PC-9 (cell line): ENCODE measurements at regions of chr7 and their contacts with region 1.

Region 1: DNA sequence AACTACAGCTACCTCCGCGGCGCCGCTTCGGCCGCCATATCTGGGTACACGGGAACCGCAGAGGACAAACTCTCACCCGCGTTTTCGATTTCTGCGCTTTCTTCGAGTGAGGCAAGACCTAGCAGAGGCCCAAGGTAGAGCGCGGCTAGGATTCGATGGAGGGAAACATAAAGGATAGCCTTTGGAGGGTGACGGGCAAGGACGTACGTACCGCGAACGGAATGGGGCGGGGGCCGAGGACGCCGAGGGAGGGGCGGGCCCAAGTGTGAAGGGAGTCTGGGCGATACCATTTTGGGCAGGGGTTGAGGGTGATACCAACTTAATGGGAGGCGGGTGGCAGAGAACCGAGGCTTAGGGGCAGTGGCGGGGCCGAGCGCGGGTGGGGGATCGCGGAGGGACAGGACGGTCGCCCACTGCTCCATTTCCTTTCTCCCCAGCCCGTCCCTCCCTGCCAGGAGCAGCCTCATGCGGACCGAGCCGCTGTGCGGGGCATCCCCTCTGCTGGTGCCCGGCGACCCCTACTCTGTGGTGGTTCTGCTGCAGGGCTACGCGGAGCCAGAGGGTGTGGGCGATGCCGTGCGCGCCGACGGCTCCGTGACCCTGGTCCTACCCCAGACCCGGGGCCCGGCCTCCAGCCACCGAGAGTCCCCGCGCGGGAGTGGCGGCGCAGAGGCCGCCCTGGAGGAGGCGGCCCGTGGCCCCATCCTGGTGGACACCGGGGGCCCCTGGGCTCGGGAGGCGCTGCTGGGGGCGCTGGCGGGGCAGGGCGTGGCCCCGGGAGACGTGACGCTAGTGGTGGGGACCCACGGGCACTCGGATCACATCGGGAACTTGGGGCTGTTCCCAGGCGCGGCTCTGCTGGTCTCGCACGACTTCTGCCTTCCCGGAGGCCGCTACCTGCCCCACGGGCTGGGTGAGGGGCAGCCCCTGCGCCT is at the start of gene MBLAC1:
- DNase-seq: peak; percentile 68 to 92
- H3K4me3 ChIP-seq: peak within 1 kb of the TSS; percentile 75
- H3K27ac ChIP-seq: peak within 1 kb of the TSS; percentile 82
- H3K4me1 ChIP-seq: peaks cover 19% of the 10 kb centered on the region; the same call in 1 of the 2 replicates
- H3K27me3 ChIP-seq: no peaks in the 10 kb centered on the region
- CTCF ChIP-seq: no peak
- total RNA-seq, gene MBLAC1: 0.70 and 1.4 TPM in 2 replicates

Region 2: DNA sequence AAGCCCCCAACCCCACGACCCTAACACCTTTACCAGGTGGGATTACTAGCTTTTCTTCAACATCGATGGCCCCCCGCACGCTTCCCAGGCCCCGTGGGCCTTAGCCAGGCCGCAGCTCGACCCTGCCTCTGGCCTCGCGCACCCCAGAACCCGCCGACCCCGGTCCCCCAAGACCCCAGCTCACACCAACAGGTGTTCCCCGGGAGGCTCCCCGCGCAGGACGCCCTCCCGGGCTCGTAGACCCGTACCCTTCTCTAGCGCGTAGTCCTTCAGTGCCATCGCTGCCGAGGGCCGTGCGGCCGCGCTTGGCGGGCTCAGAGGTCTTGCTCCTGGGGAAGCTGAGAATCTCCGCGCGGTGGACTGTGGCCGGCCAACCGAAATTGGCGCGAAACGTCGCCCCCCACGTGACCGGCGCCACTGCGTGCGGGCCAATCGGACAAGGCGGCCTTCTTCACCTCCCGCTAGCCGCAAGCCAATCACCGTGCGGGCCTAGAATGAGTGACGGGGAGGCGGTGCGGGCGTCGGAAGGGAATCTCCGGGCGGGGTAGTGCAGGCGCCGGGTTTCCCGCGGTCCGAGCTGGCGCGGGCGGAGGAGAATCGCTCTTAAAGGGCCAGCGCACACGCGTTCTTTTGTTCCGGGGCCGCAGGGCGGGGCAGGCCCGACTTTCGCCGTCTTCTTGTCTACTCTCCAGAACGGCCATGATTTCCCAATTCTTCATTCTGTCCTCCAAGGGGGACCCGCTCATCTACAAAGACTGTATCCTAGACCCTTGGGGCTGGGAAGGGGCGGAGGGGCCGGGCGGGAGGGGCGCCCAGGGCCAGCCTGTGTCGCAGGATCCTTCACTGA is 26.0 kb before region 1 on chr7 and contains the starts of genes AP4M1 and MCM7:
- CTCF ChIA-PET with region 1: interaction called, 6 read pairs
- POLR2A ChIA-PET with region 1: interaction called, 8 read pairs
- intact Hi-C with region 1: loop called (anchors 2 kb)
- DNase-seq: peak; percentile 96 to 100
- H3K4me3 ChIP-seq: peak within 1 kb of the TSS; percentile 99
- H3K27ac ChIP-seq: peak within 1 kb of the TSS; percentile 85
- H3K4me1 ChIP-seq: peaks cover 19% of the 10 kb centered on the region
- H3K27me3 ChIP-seq: no peaks in the 10 kb centered on the region
- CTCF ChIP-seq: no peak
- total RNA-seq, gene AP4M1: 18.1 and 26.2 TPM in 2 replicates
- total RNA-seq, gene MCM7: 195 and 238 TPM in 2 replicates

Region 3: GRCh38 chr7:100195222-100195621 is 68.0 kb after region 1 on chr7:
- CTCF ChIA-PET with region 1: no interaction called
- POLR2A ChIA-PET with region 1: no interaction called
- intact Hi-C with region 1: no loop called
- DNase-seq: no peak
- H3K4me3 ChIP-seq: no peak overlapping the region
- H3K27ac ChIP-seq: no peak overlapping the region
- H3K4me1 ChIP-seq: peaks cover 22% of the 10 kb centered on the region
- H3K27me3 ChIP-seq: no peaks in the 10 kb centered on the region
- CTCF ChIP-seq: no peak

Region 4: GRCh38 chr7:100271716-100272537 is 144.7 kb after region 1 on chr7:
- CTCF ChIA-PET with region 1: no interaction called
- POLR2A ChIA-PET with region 1: interaction called, 14 read pairs
- intact Hi-C with region 1: no loop called
- DNase-seq: peak; percentile 78 to 98
- H3K4me3 ChIP-seq: peak overlapping the region; percentile 60
- H3K27ac ChIP-seq: no peak overlapping the region
- H3K4me1 ChIP-seq: peaks cover 28% of the 10 kb centered on the region
- H3K27me3 ChIP-seq: no peaks in the 10 kb centered on the region
- CTCF ChIP-seq: no peak